ENCODE measurements at regions of chr14 and their contacts with region 1.

Region 1: GRCh38 chr14:100383727-100384158 is 60.6 kb downstream of the SLC25A47 start:
- DNase-seq: peak; percentile 58 to 74
- ATAC-seq: peak; percentile 65

Region 2: GRCh38 chr14:100440187-100440631 is 56.5 kb after region 1 on chr14:
- intact Hi-C with region 1: no loop called
- DNase-seq: peak; percentile 78 to 81
- ATAC-seq: peak; percentile 73

Region 3: GRCh38 chr14:100586403-100587085 is 202.8 kb after region 1 on chr14:
- intact Hi-C with region 1: no loop called
- DNase-seq: peak; percentile 47 to 49
- ATAC-seq: peak; percentile 81

Region 4: DNA sequence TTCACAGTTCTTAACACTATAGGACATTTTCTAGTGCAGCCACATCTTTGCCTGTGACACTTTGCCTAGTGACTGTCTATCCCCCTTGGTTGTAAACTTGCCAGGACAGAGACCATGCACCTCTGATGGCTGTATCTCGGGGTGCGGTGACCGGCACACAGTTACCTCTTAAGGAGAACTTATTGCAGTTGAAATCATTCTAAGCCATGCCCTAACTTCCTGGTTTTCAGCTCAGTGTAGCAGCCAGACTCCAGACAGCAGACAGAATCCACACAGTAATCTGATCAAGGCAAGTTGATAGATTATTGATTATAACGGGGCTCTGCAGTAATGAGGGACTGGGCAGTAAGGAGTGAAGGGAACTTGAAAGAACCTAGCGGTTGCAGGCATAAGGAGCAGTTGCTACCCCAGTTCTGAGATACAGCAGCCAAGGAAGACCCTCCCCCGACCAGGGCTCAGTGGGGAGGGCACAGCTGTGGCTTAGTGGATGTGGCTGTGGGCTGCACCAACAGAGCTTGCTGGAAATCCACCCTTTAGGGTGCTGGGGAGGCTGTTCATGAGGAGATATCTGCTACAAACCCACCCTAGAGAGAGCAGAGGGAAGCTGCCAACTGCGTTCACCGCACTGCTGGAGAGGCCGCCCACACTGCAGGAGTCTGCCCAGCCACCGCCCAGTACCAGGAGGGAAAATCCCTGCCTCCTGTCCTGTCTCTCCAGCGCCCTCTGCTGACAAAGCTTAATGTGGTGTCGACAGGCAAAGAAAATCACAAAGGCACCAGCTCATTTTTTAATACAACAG is 261.6 kb after region 1 on chr14:
- intact Hi-C with region 1: loop called (anchors 5 to 10 kb)
- DNase-seq: peak; percentile 91 to 97
- ATAC-seq: peak; percentile 79

Region 5: DNA sequence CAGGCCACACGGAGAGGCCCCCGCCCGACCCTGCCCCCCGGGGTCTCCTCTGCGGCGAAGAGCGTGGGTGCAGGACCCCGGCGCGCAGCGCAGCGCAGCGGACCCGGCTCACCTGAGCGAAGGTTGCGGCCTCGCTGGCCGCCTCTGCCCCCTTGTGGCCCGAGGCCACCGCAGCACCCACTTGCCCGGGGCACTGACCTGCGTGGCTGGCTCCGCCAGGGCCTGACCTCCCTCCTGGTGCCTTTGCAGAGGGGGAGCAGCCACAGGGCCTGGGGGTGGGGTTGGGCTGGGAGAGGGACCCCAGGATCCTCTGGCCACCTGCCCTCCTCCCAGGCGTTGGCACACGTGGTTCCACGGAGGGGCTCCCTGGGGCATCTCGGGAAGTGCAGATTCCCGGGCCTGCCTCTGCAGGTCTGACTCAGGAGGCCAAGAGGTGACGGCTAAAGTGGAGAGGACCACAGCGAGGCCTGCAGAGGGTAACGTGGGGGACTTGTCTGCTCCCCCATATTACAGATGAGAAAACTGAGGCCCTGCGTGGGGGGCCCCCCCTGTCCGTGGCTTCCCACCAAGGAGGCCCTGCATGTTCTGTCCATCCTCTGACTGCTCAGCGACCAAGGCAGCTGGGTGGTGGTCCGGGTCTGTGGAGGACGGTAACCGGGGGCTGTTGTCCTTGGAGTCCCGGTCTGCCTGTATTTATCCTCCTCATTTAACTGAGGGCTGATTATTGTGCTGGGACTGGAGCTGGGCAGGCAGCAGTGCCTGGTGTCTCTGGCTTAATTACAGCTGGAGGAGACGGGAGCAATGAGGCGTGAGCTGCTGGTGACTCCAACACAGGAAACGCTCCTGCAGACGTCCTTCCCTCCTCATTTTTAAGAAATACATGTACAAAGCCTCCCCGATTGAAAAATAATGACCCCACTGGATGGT is 271.3 kb after region 1 on chr14:
- intact Hi-C with region 1: loop called in 1 of 2 experiments (anchors 10 kb)
- DNase-seq: peak in 1 of 2 donors; percentile 65
- ATAC-seq: peak; percentile 82

Region 6: DNA sequence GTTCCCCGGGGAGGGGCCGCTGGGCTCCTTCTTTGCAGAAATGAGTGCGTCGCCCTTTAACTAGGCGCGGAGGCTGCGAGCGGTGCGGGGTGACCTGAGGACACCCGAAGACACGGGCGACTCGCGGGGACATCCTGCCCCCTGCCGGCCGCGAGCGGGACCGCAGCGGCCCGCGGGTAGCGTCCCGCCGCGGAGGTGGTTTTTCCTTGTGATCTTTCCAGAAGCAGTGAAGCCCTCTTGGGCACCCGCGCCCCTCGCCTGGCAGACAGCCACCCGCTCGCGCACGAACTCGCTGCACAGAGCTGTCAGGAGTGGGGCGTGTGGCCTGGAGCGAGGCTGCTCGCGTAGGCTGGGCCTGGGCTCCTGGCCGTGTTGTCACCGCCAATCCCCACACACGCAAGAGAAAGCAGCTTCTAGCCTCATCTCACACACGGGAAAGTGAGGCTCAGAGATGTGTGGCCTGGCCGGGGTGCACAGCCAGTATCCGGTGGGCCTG is 1244.8 kb after region 1 on chr14:
- intact Hi-C with region 1: loop called in 1 of 2 experiments (anchors 5 kb)
- DNase-seq: peak; percentile 56 to 79
- ATAC-seq: peak; percentile 93

Measured in left colon (tissue), 2 donors.